ENCODE measurements at regions of chr6 and their contacts with region 1.

Region 1: GRCh38 chr6:26175428-26176181 is 88.4 kb downstream of the HFE start:
- DNase-seq: peak; percentile 60
- H3K4me3 ChIP-seq: no peak overlapping the region
- H3K27ac ChIP-seq: no peak overlapping the region
- H3K4me1 ChIP-seq: peaks cover 3% of the 10 kb centered on the region
- H3K27me3 ChIP-seq: no peaks in the 10 kb centered on the region
- CTCF ChIP-seq: peak; percentile 52 to 64

Region 2: DNA sequence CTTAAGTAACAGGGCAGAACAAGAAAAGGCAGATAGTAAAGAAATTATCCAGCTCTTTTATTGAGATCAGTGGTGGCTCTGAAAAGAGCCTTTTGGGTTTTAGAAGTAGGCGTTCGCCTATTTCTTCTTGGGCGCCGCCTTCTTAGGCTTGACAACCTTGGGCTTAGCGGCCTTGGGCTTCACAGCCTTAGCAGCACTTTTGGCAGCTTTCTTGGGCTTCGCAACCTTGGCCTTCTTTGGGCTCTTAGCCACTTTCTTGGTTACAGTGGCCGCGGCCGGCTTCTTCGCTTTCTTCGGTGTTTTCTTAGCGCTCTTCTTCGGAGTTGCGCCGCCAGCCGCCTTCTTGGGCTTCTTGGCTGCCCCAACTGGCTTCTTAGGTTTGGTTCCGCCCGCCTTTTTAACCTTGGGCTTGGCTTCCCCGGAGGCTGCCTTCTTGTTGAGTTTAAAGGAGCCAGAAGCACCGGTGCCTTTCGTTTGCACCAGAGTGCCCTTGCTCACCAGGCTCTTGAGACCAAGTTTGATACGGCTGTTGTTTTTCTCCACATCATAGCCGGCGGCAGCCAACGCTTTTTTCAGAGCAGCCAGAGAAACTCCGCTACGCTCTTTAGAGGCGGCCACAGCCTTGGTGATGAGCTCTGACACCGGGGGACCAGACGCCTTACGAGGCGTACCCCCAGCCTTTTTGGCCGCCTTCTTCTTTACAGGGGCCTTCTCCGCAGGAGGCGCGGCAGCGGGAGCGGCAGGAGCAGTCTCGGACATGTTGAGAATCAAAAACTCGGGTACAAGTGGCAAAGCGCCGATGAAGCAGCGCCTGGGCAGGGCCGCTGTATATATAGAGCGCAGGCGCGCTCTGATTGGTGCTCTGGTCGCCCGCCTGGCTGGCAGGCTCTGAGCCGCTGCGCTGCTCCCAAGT is 119.7 kb before region 1 on chr6:
- CTCF ChIA-PET with region 1: no interaction called
- dilution Hi-C with region 1: no loop called
- in situ Hi-C with region 1: no loop called
- intact Hi-C with region 1: no loop called
- DNase-seq: peak; percentile 88
- H3K4me3 ChIP-seq: peak overlapping the region; percentile 61 to 82 (median 62)
- H3K27ac ChIP-seq: peak overlapping the region; percentile 91
- H3K4me1 ChIP-seq: peaks cover 9% of the 10 kb centered on the region
- H3K27me3 ChIP-seq: no peaks in the 10 kb centered on the region
- CTCF ChIP-seq: no peak

Region 3: GRCh38 chr6:26122793-26123674 is 52.6 kb before region 1 on chr6:
- CTCF ChIA-PET with region 1: no interaction called
- dilution Hi-C with region 1: no loop called
- in situ Hi-C with region 1: no loop called
- intact Hi-C with region 1: loop called (anchors 1 kb)
- DNase-seq: peak; percentile 97
- H3K4me3 ChIP-seq: peak overlapping the region; percentile 51 to 62 (median 53)
- H3K27ac ChIP-seq: peak overlapping the region; percentile 92
- H3K4me1 ChIP-seq: peaks cover 28% of the 10 kb centered on the region
- H3K27me3 ChIP-seq: no peaks in the 10 kb centered on the region
- CTCF ChIP-seq: no peak

Region 4: DNA sequence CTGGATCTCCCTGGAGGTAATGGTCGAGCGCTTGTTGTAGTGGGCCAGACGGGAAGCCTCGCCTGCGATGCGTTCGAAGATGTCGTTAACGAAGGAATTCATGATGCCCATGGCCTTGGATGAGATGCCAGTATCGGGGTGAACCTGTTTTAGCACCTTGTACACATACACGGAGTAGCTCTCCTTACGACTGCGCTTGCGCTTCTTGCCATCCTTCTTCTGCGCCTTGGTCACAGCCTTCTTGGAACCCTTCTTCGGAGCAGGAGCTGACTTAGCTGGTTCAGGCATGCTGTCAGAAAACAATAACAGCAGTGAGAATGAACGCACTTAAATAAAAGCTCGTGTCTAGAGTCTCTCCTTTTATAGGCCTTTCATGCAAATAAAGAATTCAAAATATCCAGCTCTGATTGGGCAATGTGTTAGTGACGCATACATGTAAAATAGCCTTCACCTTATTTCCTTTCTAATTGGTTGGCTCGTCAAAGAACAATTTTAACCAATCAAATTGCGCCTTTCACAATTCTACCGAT is 40.8 kb after region 1 on chr6:
- CTCF ChIA-PET with region 1: interaction called, 5 read pairs
- dilution Hi-C with region 1: no loop called
- in situ Hi-C with region 1: no loop called
- intact Hi-C with region 1: loop called (anchors 1 kb)
- DNase-seq: peak; percentile 98
- H3K4me3 ChIP-seq: peak overlapping the region; percentile 57 to 68 (median 65)
- H3K27ac ChIP-seq: peak overlapping the region; percentile 86
- H3K4me1 ChIP-seq: peaks cover 12% of the 10 kb centered on the region
- H3K27me3 ChIP-seq: no peaks in the 10 kb centered on the region
- CTCF ChIP-seq: no peak

Region 5: DNA sequence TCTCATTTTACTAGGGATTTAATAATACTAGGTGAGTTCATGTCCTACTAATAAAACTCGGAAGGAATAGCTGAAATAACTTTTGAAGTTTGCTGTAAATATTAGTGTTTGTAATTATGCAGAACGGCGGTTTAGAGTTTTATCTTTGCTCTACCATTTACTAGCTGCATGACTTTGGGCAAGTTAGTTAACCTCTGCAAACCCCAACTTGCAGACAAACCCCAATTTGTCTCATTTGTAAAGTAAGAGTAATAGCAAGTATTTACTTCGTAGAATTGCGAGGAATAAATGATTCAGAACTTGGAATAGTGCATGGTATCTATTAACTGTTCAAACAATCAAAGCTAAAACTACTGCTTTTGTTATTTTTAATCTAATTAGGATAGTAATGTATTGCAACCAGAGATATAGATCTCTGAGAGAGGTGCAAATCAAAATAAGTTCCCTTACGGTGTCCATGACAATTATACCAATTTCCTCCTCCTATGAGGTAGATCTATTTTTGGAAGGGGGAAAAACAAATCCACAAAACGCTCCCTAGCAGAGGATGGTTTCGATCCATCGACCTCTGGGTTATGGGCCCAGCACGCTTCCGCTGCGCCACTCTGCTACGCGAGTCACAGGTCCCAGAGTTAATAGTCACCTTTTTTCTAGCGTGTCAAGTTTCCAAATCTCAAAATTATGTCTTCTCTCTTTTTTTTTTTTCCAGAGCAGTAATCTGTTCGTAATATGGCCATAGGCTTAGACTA is 154.3 kb after region 1 on chr6:
- CTCF ChIA-PET with region 1: no interaction called
- dilution Hi-C with region 1: no loop called
- in situ Hi-C with region 1: no loop called
- intact Hi-C with region 1: loop called (anchors 1 kb)
- DNase-seq: peak; percentile 51
- H3K4me3 ChIP-seq: peak overlapping the region; percentile 56 to 98 (median 86)
- H3K27ac ChIP-seq: no peak overlapping the region
- H3K4me1 ChIP-seq: peaks cover 13% of the 10 kb centered on the region
- H3K27me3 ChIP-seq: no peaks in the 10 kb centered on the region
- CTCF ChIP-seq: no peak

Region 6: DNA sequence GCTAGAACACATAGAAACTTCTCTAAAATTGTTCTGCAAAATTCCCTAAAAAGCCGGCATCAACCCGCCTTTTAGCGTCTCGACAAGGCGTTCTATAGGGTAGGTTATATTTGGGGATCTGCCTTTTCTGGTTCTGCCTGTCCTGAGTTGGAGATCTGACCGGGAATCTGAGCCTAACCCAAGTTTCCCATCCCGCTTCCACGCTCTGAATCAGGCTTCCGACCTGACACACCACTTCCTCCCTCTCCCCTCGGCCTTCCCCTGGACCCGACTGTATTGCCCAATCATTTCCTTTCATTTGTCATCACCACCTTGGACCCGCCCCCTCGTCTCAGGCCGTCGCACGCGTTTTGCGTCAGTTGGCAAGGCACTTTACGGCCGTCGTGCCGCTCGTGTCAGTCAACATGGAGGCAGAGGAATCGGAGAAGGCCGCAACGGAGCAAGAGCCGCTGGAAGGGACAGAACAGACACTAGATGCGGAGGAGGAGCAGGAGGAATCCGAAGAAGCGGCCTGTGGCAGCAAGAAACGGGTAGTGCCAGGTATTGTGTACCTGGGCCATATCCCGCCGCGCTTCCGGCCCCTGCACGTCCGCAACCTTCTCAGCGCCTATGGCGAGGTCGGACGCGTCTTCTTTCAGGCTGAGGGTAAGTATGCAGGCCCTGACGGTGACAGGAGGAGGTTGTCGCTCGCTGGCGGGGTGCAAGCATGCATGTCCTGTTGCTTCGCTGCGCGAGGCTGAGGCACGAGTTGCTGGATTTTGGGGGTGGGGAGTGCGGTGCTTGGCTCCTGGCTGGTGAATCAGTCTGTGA is 421.2 kb after region 1 on chr6 and contains the start of gene ABT1:
- CTCF ChIA-PET with region 1: no interaction called
- dilution Hi-C with region 1: no loop called
- in situ Hi-C with region 1: no loop called
- intact Hi-C with region 1: loop called (anchors 2 kb)
- DNase-seq: peak; percentile 98
- H3K4me3 ChIP-seq: peak within 1 kb of the TSS; percentile 61 to 99 (median 89)
- H3K27ac ChIP-seq: peak within 1 kb of the TSS; percentile 68
- H3K4me1 ChIP-seq: peaks cover 19% of the 10 kb centered on the region
- H3K27me3 ChIP-seq: no peaks in the 10 kb centered on the region
- CTCF ChIP-seq: no peak
- total RNA-seq, gene ABT1: 14.2 to 15.9 TPM